ENCODE measurements at regions of chr6 and their contacts with region 1.

Region 1: GRCh38 chr6:127737009-127737486 is 160.1 kb downstream of the C6orf58 start:
- DNase-seq: peak; percentile 12
- ATAC-seq: peak; percentile 93
- H3K4me3 ChIP-seq: no peak overlapping the region
- H3K27ac ChIP-seq: no peak overlapping the region
- H3K4me1 ChIP-seq: no peaks in the 10 kb centered on the region
- H3K27me3 ChIP-seq: no peaks in the 10 kb centered on the region
- CTCF ChIP-seq: peak; percentile 43 to 72 (median 49); a peak in 5 of 6 replicates
- EP300 ChIP-seq: no peak
- POLR2A ChIP-seq: no peak
- RAD21 ChIP-seq: peak; percentile 79

Region 2: GRCh38 chr6:127748290-127748689 is 11.2 kb after region 1 on chr6:
- CTCF ChIA-PET with region 1: interaction called, 21 read pairs
- POLR2A ChIA-PET with region 1: no interaction called
- RAD21 ChIA-PET with region 1: interaction called, 3 read pairs
- SMC1A ChIA-PET with region 1: no interaction called
- in situ Hi-C with region 1: no loop called
- intact Hi-C with region 1: no loop called
- DNase-seq: no peak
- ATAC-seq: peak; percentile 45
- H3K4me3 ChIP-seq: no peak overlapping the region
- H3K27ac ChIP-seq: no peak overlapping the region
- H3K4me1 ChIP-seq: no peaks in the 10 kb centered on the region
- H3K27me3 ChIP-seq: no peaks in the 10 kb centered on the region
- CTCF ChIP-seq: no peak
- EP300 ChIP-seq: no peak
- POLR2A ChIP-seq: no peak
- RAD21 ChIP-seq: no peak

Region 3: GRCh38 chr6:128327890-128328289 is 590.8 kb after region 1 on chr6:
- CTCF ChIA-PET with region 1: interaction called, 32 read pairs
- POLR2A ChIA-PET with region 1: no interaction called
- RAD21 ChIA-PET with region 1: interaction called, 15 read pairs
- SMC1A ChIA-PET with region 1: interaction called, 6 read pairs
- in situ Hi-C with region 1: loop called (anchors 5 kb)
- intact Hi-C with region 1: loop called (anchors 1 kb)
- DNase-seq: no peak
- ATAC-seq: peak; percentile 97
- H3K4me3 ChIP-seq: no peak overlapping the region
- H3K27ac ChIP-seq: no peak overlapping the region
- H3K4me1 ChIP-seq: no peaks in the 10 kb centered on the region
- H3K27me3 ChIP-seq: no peaks in the 10 kb centered on the region
- CTCF ChIP-seq: peak; percentile 61 to 74 (median 70)
- EP300 ChIP-seq: no peak
- POLR2A ChIP-seq: no peak
- RAD21 ChIP-seq: peak; percentile 77

Region 4: DNA sequence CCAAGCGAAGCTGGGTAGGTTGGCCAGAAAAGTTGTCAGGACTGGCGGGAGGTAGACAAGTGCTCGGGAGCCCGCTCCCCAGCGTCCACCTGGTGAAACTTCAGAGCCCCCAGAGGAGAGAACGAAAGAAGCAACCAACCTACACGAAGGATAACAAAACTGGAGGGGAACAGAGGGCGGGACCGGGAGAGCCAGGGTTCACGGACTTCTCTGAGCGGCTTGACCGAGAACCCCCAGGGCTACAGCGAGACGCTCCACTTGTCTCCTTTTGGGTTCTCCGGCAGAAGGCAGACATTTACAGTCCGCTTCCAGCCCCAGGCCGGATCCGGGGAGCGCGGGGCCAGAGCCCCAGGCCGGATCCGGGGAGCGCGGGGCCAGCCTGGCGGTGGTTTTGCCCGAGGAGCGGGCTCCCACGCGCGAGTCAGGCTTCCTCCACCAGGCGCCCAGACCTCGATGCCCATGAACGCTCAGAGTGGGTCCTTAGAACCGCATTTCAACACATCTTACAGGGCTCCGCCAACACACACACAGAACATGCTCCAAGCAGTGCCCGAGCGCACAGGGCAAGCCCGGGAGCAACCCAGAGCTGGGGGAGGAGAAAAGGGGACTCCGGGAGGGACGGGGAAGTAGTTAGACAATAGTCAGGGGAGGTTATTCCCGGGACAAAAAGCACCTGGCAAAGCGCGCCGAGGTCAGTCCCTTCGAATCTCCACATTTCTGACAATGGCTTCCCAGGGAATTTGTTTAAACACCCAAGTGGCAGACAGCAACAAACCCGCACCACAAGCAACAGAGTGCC is 782.3 kb after region 1 on chr6:
- CTCF ChIA-PET with region 1: no interaction called
- POLR2A ChIA-PET with region 1: no interaction called
- RAD21 ChIA-PET with region 1: no interaction called
- SMC1A ChIA-PET with region 1: no interaction called
- in situ Hi-C with region 1: no loop called
- intact Hi-C with region 1: loop called (anchors 10 kb)
- DNase-seq: no peak
- ATAC-seq: peak; percentile 44
- H3K4me3 ChIP-seq: 0 out of 2 replicates have a peak overlapping the region, but pooled peaks have one; percentile 50
- H3K27ac ChIP-seq: no peak overlapping the region
- H3K4me1 ChIP-seq: peaks cover 5% of the 10 kb centered on the region
- H3K27me3 ChIP-seq: peaks cover 11 to 29% of the 10 kb centered on the region in 2 experiments
- CTCF ChIP-seq: no peak
- EP300 ChIP-seq: no peak
- POLR2A ChIP-seq: no peak
- RAD21 ChIP-seq: no peak

Region 5: GRCh38 chr6:128731249-128732165 is 994.5 kb after region 1 on chr6:
- CTCF ChIA-PET with region 1: interaction called, 5 read pairs
- POLR2A ChIA-PET with region 1: no interaction called
- RAD21 ChIA-PET with region 1: interaction called, 6 read pairs
- SMC1A ChIA-PET with region 1: interaction called, 3 read pairs
- in situ Hi-C with region 1: loop called (anchors 10 kb)
- intact Hi-C with region 1: loop called (anchors 1 kb)
- DNase-seq: no peak
- ATAC-seq: peak; percentile 77
- H3K4me3 ChIP-seq: no peak overlapping the region
- H3K27ac ChIP-seq: no peak overlapping the region
- H3K4me1 ChIP-seq: no peaks in the 10 kb centered on the region
- H3K27me3 ChIP-seq: no peaks in the 10 kb centered on the region
- CTCF ChIP-seq: peak; percentile 37 to 63 (median 43); a peak in 4 of 6 replicates
- EP300 ChIP-seq: no peak
- POLR2A ChIP-seq: no peak
- RAD21 ChIP-seq: peak; percentile 64